HCT116 (cell line): ENCODE measurements at regions of chr4 and their contacts with region 1.

Region 1: DNA sequence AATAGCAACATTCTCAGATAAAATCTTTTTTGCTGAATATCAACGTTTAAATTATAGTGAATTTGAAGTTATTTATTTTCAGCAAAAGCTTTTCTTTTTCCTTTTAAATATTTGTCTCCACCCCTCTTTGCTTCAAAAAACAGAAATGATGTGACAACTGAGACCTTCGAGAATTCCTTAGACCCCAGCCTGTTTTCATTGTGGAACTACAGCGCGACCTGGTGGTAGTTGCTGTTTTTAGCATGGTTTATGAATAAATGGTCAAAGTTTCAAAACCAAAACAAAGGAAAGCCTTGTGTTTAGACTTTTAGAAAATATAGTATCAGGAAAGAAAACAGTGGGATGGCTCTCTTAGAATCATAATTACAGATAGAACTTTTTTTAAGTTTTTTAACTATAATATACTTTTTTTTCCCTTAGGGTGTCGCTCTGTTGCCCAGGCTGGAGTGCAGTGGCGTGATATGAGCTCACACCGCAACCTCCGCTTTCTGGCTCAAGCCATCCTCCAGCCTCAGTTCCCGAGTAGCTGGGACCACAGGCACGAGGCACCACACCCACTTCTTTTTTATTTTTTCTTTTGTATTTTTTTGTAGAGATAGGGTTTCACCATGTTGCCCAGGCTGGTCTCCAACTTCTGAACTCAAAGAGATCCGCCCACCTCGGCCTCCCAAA is 26.8 kb upstream of the TMEM184C start:
- DNase-seq: peak; percentile 54
- ATAC-seq: peak; percentile 83
- H3K4me3 ChIP-seq: no peak overlapping the region
- H3K27ac ChIP-seq: no peak overlapping the region
- H3K4me1 ChIP-seq: no peaks in the 10 kb centered on the region
- H3K27me3 ChIP-seq: no peaks in the 10 kb centered on the region
- CTCF ChIP-seq: peak; percentile 78 to 90 (median 81)
- POLR2A ChIP-seq: no peak
- RAD21 ChIP-seq: peak; percentile 94

Region 2: DNA sequence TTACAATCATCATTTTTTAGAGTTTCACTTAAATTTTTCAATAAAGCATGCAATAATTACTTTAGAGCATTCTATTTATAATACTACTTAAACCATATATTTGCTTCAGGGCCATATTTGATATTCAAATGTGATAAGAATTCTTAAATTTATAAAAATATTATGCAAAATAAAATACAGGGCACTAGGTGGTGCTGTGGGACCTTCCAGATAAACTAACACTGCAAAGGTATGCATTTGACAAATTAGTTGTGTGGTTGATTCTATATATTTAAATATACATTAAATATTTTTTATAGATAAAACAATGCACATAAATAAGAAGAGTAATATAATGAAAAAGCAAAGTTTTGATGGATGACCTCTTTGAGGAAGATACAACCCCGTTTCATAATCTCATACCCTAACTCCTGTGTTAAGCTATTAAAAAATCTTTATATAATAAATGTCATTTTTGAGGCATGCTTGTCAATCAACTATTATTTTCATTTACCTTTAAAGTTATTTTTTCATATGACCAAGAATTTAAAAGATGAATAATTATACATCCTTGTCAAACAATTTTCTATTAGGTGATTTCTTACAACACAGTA is 1247.7 kb before region 1 on chr4:
- CTCF ChIA-PET with region 1: no interaction called
- POLR2A ChIA-PET with region 1: no interaction called
- RAD21 ChIA-PET with region 1: no interaction called
- intact Hi-C with region 1: loop called (anchors 10 kb)
- DNase-seq: no peak
- ATAC-seq: no peak
- H3K4me3 ChIP-seq: no peak overlapping the region
- H3K27ac ChIP-seq: no peak overlapping the region
- H3K4me1 ChIP-seq: no peaks in the 10 kb centered on the region
- H3K27me3 ChIP-seq: no peaks in the 10 kb centered on the region
- CTCF ChIP-seq: peak; percentile 34 to 64 (median 46); a peak in 3 of 6 replicates
- POLR2A ChIP-seq: no peak
- RAD21 ChIP-seq: peak; percentile 74

Region 3: GRCh38 chr4:147019061-147019460 is 571.3 kb before region 1 on chr4:
- CTCF ChIA-PET with region 1: interaction called, 17 read pairs
- POLR2A ChIA-PET with region 1: no interaction called
- RAD21 ChIA-PET with region 1: no interaction called
- intact Hi-C with region 1: loop called (anchors 1 kb)
- DNase-seq: peak; percentile 36
- ATAC-seq: peak; percentile 94
- H3K4me3 ChIP-seq: no peak overlapping the region
- H3K27ac ChIP-seq: no peak overlapping the region
- H3K4me1 ChIP-seq: no peaks in the 10 kb centered on the region
- H3K27me3 ChIP-seq: peaks cover 32% of the 10 kb centered on the region
- CTCF ChIP-seq: peak; percentile 65 to 72 (median 67); a peak in 5 of 6 replicates
- POLR2A ChIP-seq: no peak
- RAD21 ChIP-seq: peak; percentile 89

Region 4: DNA sequence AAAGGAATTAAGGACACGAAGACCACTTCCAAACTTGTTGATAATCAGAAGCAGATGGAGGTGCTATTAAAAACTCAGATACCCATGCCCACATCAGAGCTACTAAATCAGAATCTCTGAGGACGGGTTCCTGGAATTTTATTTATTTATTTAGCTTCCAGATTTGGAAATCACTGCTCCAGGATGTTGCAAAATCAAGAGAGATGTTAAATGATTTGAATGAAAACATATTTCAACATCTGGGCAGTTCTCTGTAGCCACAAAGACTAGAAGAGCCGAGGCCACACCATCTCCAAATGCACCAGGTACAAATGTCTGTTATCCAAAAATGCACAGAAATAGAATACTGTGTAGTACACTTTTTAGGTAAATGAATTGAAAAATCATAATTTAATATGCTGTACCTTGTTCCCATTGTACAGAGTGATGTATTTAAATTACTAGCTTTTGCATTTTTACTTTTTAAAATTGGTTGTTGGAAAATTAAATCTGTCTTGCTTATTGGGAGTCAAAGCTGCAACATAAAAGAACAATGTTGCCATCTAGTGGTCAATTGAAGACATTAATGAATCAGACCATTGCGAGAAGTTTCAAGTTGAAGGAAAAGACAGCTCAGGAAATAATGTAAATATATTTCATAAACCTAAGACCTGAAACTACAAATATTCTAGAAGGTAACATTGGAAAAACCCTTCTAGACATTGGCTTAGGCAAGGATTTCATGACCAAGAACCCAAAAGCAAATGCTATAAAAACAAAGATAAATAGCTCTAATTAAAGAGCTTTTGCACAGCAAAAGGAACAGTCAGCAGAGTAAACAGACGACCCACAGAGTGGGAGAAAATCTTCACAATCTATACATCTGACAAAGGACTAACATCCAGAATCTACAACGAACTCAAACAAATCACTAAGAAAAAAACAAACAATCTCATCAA is 493.4 kb before region 1 on chr4:
- CTCF ChIA-PET with region 1: interaction called, 19 read pairs
- POLR2A ChIA-PET with region 1: no interaction called
- RAD21 ChIA-PET with region 1: interaction called, 3 to 4 read pairs
- intact Hi-C with region 1: loop called (anchors 1 kb)
- DNase-seq: peak; percentile 32
- ATAC-seq: peak; percentile 76
- H3K4me3 ChIP-seq: no peak overlapping the region
- H3K27ac ChIP-seq: no peak overlapping the region
- H3K4me1 ChIP-seq: no peaks in the 10 kb centered on the region
- H3K27me3 ChIP-seq: peaks cover 37% of the 10 kb centered on the region
- CTCF ChIP-seq: peak; percentile 50 to 72 (median 55); a peak in 5 of 6 replicates
- POLR2A ChIP-seq: no peak
- RAD21 ChIP-seq: peak; percentile 81

Region 5: DNA sequence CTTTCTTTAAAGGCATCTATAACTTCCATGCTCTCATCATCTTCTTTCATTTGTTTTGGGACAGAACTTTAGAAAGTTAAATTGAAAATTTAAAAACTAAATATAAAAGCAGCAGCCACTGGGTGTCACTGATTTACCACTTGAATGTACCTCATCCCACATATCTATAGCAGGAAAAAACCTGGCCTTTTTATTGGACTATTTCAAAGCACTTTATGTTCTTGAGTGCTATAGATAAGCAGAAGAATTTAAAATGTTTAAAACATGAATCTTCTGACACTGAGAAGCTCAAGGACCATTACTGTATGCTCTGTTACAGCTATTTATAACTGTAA is 479.4 kb before region 1 on chr4:
- CTCF ChIA-PET with region 1: interaction called, 7 read pairs
- POLR2A ChIA-PET with region 1: no interaction called
- RAD21 ChIA-PET with region 1: no interaction called
- intact Hi-C with region 1: loop called (anchors 1 kb)
- DNase-seq: no peak
- ATAC-seq: peak; percentile 50; the same call in 1 of the 2 replicates
- H3K4me3 ChIP-seq: no peak overlapping the region
- H3K27ac ChIP-seq: no peak overlapping the region
- H3K4me1 ChIP-seq: no peaks in the 10 kb centered on the region
- H3K27me3 ChIP-seq: no peaks in the 10 kb centered on the region
- CTCF ChIP-seq: 0 out of 6 replicates have a peak, but pooled peaks of 1 of the 3 experiments have one; percentile 29
- POLR2A ChIP-seq: no peak
- RAD21 ChIP-seq: peak; percentile 60

Region 6: DNA sequence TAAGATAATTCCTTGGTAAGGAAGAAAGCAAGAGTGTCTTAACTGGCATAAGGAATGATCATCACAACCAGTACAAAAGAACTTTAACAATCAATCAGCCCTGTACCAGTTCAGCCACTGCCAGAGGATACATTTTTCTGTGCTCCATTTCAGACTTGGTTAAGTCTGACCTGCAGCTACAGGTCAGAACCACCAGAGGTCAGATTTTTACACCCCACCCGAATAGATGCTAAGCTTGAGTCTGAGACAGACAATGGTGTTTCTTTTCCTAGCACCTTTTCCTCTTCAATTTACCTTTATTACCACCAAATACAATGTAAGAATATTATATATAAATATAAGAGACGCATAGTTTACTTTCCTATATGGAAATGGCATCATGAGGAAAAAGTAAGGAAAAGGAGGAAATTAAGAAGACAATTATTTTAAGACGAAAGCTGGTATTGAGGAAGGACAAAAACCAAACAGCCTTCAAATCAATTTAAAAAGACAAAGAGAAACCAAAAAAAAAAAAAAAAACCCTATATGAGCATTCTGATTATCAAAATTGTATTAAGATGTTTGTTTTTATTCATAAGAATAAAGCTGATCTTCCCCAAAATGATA is 429.4 kb before region 1 on chr4:
- CTCF ChIA-PET with region 1: interaction called, 36 read pairs
- POLR2A ChIA-PET with region 1: no interaction called
- RAD21 ChIA-PET with region 1: interaction called in 1 of 2 experiments, 3 read pairs
- intact Hi-C with region 1: loop called (anchors 1 kb)
- DNase-seq: peak; percentile 36
- ATAC-seq: peak; percentile 94
- H3K4me3 ChIP-seq: no peak overlapping the region
- H3K27ac ChIP-seq: no peak overlapping the region
- H3K4me1 ChIP-seq: no peaks in the 10 kb centered on the region
- H3K27me3 ChIP-seq: no peaks in the 10 kb centered on the region
- CTCF ChIP-seq: peak; percentile 77 to 80 (median 77)
- POLR2A ChIP-seq: no peak
- RAD21 ChIP-seq: peak; percentile 88

Region 7: GRCh38 chr4:147518846-147519767 is 71.3 kb before region 1 on chr4:
- CTCF ChIA-PET with region 1: interaction called, 21 read pairs
- POLR2A ChIA-PET with region 1: no interaction called
- RAD21 ChIA-PET with region 1: interaction called in 1 of 2 experiments, 8 read pairs
- intact Hi-C with region 1: loop called (anchors 2 kb)
- DNase-seq: peak; percentile 59
- ATAC-seq: peak; percentile 92
- H3K4me3 ChIP-seq: no peak overlapping the region
- H3K27ac ChIP-seq: no peak overlapping the region
- H3K4me1 ChIP-seq: no peaks in the 10 kb centered on the region
- H3K27me3 ChIP-seq: no peaks in the 10 kb centered on the region
- CTCF ChIP-seq: peak; percentile 65 to 96 (median 95); a peak in 5 of 6 replicates
- POLR2A ChIP-seq: no peak
- RAD21 ChIP-seq: peak; percentile 78